OCI-LY7 (cell line): ENCODE measurements at regions of chr22 and their contacts with region 1.

Region 1: DNA sequence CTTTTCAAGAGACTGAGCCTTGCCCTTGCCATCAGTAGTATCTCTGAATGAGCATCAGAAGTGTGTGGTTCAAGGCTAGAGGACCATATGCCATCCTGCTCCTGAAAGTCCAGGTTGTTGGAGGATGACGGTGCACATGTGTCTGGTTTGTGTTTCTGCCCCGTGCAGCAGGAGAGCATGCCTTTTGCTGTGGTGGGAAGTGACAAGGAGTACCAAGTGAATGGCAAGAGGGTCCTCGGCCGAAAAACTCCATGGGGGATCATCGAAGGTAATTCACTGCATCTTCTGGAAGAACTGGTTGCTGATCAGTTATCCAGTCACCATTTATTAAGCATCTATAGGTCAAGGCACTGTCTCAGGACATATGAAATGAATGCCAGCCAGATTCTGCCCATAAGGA is 6.1 kb upstream of the WBP2NL start:
- DNase-seq: no peak
- H3K4me3 ChIP-seq: no peak overlapping the region
- H3K27ac ChIP-seq: no peak overlapping the region
- H3K4me1 ChIP-seq: no peaks in the 10 kb centered on the region
- CTCF ChIP-seq: no peak

Region 2: GRCh38 chr22:42033263-42034181 is 41.0 kb after region 1 on chr22:
- CTCF ChIA-PET with region 1: no interaction called
- POLR2A ChIA-PET with region 1: no interaction called
- intact Hi-C with region 1: loop called (anchors 5 kb)
- DNase-seq: peak; percentile 9
- H3K4me3 ChIP-seq: no peak overlapping the region
- H3K27ac ChIP-seq: no peak overlapping the region
- H3K4me1 ChIP-seq: no peaks in the 10 kb centered on the region
- CTCF ChIP-seq: no peak